Panc1 (cell line): ENCODE measurements at regions of chr2 and their contacts with region 1.

Region 1: GRCh38 chr2:178143481-178143880 is 31.2 kb downstream of the RBM45 start:
- DNase-seq: no peak
- ATAC-seq: no peak
- H3K4me3 ChIP-seq: no peak overlapping the region
- H3K27ac ChIP-seq: no peak overlapping the region
- H3K4me1 ChIP-seq: no peaks in the 10 kb centered on the region
- H3K27me3 ChIP-seq: no peaks in the 10 kb centered on the region
- CTCF ChIP-seq: no peak

Region 2: GRCh38 chr2:177970670-177971454 is 172.6 kb before region 1 on chr2:
- CTCF ChIA-PET with region 1: no interaction called
- POLR2A ChIA-PET with region 1: no interaction called
- in situ Hi-C with region 1: no loop called
- intact Hi-C with region 1: no loop called
- DNase-seq: no peak
- ATAC-seq: no peak
- H3K4me3 ChIP-seq: no peak overlapping the region
- H3K27ac ChIP-seq: no peak overlapping the region
- H3K4me1 ChIP-seq: no peaks in the 10 kb centered on the region
- H3K27me3 ChIP-seq: no peaks in the 10 kb centered on the region
- CTCF ChIP-seq: no peak

Region 3: DNA sequence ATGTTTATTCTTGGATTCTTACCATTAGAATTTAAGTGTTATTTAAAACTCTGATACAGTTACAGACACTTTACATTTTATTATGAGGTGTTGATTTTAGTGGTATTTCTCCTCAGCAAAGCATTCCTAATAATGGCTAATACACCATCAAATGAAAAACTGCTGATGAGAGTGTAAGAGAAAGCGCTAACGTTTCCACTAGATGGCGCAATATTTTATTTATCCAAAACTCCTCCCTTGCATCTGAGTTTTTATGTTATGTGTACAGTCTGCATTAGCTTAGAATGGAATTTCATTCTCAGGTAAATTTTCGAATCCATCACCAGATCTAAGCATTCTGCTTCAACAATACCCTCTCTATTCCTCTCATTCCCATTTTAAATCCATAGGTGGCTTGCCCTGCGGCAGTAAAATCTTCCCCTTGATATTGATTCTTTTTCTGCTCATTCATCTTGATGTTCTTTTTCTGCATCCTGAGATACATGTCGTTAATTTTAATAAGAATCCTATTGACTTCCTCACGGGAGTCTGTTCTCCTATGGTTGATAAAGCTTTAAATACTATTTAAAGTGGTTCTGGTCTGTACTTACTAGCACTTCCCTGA is 253.6 kb after region 1 on chr2:
- CTCF ChIA-PET with region 1: interaction called, 14 read pairs
- POLR2A ChIA-PET with region 1: no interaction called
- in situ Hi-C with region 1: no loop called
- intact Hi-C with region 1: no loop called
- DNase-seq: peak; percentile 32
- ATAC-seq: peak; percentile 85
- H3K4me3 ChIP-seq: no peak overlapping the region
- H3K27ac ChIP-seq: no peak overlapping the region
- H3K4me1 ChIP-seq: no peaks in the 10 kb centered on the region
- H3K27me3 ChIP-seq: no peaks in the 10 kb centered on the region
- CTCF ChIP-seq: peak; percentile 74; the same call in 1 of the 2 replicates